ENCODE measurements at regions of chr14 and their contacts with region 1.

Region 1: GRCh38 chr14:102316743-102317563 is 2.6 kb upstream of the ZNF839 start:
- DNase-seq: peak in 1 of 2 donors; percentile 96
- H3K4me3 ChIP-seq: peak overlapping the region; percentile 41 to 52
- H3K27ac ChIP-seq: peak overlapping the region; percentile 86
- H3K4me1 ChIP-seq: peaks cover 44% of the 10 kb centered on the region
- H3K27me3 ChIP-seq: no peaks in the 10 kb centered on the region
- CTCF ChIP-seq: peak; percentile 16 to 88 (median 84)
- POLR2A ChIP-seq: no peak

Region 2: GRCh38 chr14:102139248-102140026 is 177.5 kb before region 1 on chr14 and contains the start of gene WDR20:
- intact Hi-C with region 1: loop called (anchors 10 kb)
- DNase-seq: peak; percentile 95 to 100
- H3K4me3 ChIP-seq: peak within 1 kb of the TSS; percentile 85 to 98
- H3K27ac ChIP-seq: peak within 1 kb of the TSS; percentile 88
- H3K4me1 ChIP-seq: peaks cover 35% of the 10 kb centered on the region
- H3K27me3 ChIP-seq: no peaks in the 10 kb centered on the region
- CTCF ChIP-seq: no peak
- POLR2A ChIP-seq: peak in 1 of 2 donors; percentile 40
- total RNA-seq, gene WDR20: 24.8 TPM

Region 3: DNA sequence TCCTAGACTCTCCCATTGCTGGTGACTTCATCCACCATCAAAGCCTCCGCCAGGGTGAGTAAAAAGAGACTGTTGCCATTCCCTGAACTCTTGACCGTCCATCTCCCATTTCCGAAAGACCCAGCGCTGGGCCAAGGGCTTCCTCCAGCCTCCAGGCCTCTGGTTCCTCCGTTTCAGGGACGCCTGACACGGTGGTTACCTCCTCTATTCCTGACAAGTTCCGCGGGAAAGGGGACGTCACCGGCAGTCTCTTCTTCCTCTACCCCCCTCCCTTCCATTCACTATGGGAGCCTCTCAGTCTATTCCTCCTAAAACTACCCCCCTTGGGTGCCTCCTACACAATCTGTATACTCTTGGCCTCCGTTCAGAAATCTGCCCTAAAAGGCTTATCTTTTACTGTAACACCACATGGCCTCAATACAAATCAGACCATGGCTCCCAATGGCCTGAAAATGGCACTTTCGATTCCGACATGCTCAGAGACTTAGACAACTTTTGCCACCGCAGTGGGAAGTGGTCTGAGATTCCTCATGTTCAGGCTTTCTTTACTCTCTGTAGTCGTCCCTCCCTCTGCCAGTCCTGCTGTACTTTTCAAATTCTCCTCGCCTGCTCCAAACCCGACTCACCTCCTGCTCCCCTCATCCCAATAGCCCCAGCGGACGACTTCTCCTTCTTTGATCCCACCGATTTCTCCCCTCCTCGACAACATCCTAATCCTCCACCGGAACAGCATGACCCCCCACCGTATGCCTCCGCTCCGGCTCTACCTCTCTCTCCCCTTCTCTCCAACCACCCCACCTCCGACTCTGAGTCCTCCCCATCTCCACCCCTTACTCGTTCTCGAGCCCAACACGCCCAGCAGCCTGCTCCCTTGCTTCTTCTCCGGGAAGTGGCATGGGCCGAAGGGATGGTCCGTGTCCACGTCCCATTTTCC is 82.4 kb before region 1 on chr14:
- intact Hi-C with region 1: loop called (anchors 5 kb)
- DNase-seq: no peak
- H3K4me3 ChIP-seq: no peak overlapping the region
- H3K27ac ChIP-seq: no peak overlapping the region
- H3K4me1 ChIP-seq: no peaks in the 10 kb centered on the region
- H3K27me3 ChIP-seq: no peaks in the 10 kb centered on the region
- CTCF ChIP-seq: no peak
- POLR2A ChIP-seq: no peak

Measured in vagina (tissue), 2 donors.